H1 (cell line): ENCODE measurements at regions of chr18 and their contacts with region 1.

Region 1: DNA sequence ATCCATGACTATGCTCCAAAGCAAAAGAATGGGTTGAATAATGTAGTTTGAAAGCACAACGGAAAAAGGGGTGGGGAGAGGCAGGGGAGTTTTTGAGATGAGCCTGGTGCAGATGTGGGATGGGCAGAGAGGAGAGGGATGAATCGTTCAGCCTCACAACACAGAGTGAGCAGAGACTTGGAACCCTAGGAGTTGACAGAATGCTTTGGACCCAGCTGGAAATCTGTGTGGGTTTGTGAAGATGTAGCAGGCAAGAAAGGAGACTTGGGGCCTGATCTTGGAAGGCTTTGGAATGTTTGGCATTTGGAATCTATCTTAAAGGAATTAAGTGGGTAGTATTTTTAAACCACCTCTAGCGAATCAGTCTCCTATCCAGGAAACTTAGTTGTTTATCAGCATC is 66.0 kb upstream of the KCTD1 start:
- DNase-seq: no peak
- H3K4me3 ChIP-seq: no peak overlapping the region
- H3K27ac ChIP-seq: no peak overlapping the region
- H3K4me1 ChIP-seq: peaks cover 0 to 5% (median 2%) of the 10 kb centered on the region in 4 experiments; a peak in 2 of 7 replicates
- H3K27me3 ChIP-seq: no peaks in the 10 kb centered on the region
- CTCF ChIP-seq: no peak
- EP300 ChIP-seq: no peak
- POLR2A ChIP-seq: no peak
- RAD21 ChIP-seq: no peak

Region 2: GRCh38 chr18:26511339-26512071 is 102.9 kb before region 1 on chr18:
- CTCF ChIA-PET with region 1: no interaction called
- POLR2A ChIA-PET with region 1: no interaction called
- DNase-seq: no peak
- H3K4me3 ChIP-seq: no peak overlapping the region
- H3K27ac ChIP-seq: no peak overlapping the region
- H3K4me1 ChIP-seq: peaks cover 0 to 8% (median under 1%) of the 10 kb centered on the region in 4 experiments; a peak in 2 of 7 replicates
- H3K27me3 ChIP-seq: no peaks in the 10 kb centered on the region
- CTCF ChIP-seq: no peak
- EP300 ChIP-seq: no peak
- POLR2A ChIP-seq: no peak
- RAD21 ChIP-seq: no peak

Region 3: DNA sequence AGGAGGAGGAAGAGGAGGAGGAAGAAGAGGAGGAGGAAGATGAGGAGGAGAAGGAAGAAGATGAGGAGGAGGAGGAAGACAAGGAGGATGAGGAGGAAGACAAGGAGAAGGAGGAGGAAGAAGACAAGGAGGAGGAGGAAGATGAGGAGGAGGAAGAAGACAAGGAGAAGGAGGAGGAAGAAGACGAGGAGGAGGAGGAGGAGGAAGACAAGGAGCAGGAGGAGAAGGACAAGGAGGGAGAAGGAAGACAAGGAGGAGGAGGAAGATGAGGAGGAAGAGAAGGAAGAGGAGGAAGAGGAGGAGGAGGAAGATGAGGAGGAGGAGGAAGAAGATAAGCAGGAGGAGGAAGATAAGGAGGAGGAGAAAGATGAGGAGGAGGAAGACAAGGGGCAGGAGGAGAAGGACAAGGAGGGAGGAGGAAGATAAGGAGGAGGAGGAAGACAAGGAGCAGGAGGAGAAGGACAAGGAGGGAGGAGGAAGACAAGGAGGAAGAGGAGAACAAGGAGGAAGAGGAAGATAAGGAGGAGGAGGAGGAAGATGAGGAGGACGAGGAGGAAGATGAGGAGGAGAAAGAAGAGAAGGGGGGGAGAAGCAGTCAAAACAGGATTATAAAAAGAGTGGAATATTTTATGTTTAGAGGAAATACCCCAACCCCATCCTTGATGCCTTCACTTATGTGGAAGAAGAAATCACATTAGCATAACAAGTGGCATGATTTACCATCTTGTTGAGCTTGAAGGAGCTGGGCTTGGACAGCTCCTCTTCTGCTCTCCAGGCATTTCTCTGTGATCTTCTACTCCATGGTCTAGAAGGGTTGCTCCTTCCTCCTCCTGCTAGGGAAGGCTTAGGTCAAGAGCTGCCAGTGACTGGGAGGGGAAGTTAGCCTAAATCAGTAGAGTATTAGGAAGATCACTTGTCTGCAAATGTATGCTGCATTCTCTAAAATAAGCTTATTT is 20.7 kb before region 1 on chr18:
- CTCF ChIA-PET with region 1: interaction called, 12 read pairs
- POLR2A ChIA-PET with region 1: no interaction called
- DNase-seq: no peak
- H3K4me3 ChIP-seq: no peak overlapping the region
- H3K27ac ChIP-seq: no peak overlapping the region
- H3K4me1 ChIP-seq: no peaks in the 10 kb centered on the region
- H3K27me3 ChIP-seq: no peaks in the 10 kb centered on the region
- CTCF ChIP-seq: no peak
- EP300 ChIP-seq: no peak
- POLR2A ChIP-seq: no peak
- RAD21 ChIP-seq: no peak

Region 4: DNA sequence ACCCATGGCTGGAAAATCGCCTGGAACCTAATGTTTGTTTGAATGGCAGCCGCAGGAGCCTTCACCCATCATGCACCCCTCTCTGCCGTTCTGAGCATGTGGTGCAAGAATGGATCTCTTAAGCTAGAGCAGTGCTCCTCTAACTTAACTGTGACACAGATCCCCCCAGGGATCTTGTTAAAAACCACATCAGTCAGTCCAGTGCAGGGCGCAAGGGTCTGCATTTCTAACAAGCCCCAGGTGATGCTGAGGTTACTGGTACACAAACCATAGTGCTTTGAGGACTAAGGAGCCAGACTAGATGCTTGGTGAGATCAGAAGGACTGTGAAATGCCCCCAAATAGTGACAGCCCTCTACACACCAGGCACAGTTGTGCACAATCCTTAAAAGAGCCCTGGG is 21.1 kb after region 1 on chr18:
- CTCF ChIA-PET with region 1: no interaction called
- POLR2A ChIA-PET with region 1: no interaction called
- DNase-seq: no peak
- H3K4me3 ChIP-seq: no peak overlapping the region
- H3K27ac ChIP-seq: no peak overlapping the region
- H3K4me1 ChIP-seq: no peaks in the 10 kb centered on the region
- H3K27me3 ChIP-seq: no peaks in the 10 kb centered on the region; a peak in 2 of 7 replicates
- CTCF ChIP-seq: no peak
- EP300 ChIP-seq: no peak
- POLR2A ChIP-seq: no peak
- RAD21 ChIP-seq: no peak